CD8-positive, alpha-beta T cell (primary cell): ENCODE measurements at regions of chr17 and their contacts with region 1.

Region 1: DNA sequence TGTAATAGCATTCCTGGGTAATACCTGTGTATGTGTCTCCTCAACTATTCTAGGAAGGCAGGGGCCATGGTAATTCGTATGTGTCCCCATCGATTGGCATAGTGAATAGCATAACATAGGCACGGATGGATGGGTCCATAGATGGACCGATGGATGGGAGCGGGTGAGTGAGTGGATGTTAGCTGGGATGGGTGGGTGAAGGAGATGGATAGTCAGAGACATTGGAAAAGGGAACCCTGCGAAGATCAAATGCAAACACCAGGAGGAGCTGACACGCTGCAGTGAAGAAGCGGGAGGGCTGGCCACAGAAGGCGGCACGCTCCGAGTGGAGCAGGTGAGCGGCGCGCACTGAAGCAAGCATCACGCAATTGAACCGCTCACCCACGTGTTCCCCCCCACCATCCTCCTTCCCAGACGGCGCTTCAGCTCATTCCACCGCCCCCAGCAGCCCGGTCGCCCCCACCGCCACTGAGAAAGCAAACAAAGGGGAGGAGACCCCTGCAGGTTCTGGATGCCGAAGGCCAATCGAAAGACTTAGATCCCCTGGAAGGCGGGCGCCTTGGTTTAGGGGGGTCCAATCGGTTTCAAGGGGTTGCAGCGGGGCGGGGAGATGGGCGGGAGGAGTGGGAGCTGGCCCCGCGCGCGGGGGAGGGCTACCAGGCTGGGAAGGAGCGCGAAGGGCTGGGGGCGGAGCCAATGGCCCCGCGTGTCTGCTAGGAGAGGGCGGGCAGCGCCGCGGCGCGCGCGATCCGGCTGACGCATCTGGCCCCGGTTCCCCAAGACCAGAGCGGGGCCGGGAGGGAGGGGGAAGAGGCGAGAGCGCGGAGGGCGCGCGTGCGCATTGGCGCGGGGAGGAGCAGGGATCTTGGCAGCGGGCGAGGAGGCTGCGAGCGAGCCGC is at the start of gene ARRB2:
- DNase-seq: peak; percentile 98 to 100 (median 99)
- ATAC-seq: peak; percentile 81
- H3K4me3 ChIP-seq: peak within 1 kb of the TSS; percentile 91 to 95
- H3K4me3 Mint-ChIP-seq: peak within 1 kb of the TSS; percentile 98
- H3K27ac ChIP-seq: peak within 1 kb of the TSS; percentile 80 to 86
- H3K27ac Mint-ChIP-seq: peak within 1 kb of the TSS; percentile 98
- H3K4me1 ChIP-seq: peaks cover 35% of the 10 kb centered on the region
- H3K4me1 Mint-ChIP-seq: peaks cover 45% of the 10 kb centered on the region
- H3K27me3 ChIP-seq: no peaks in the 10 kb centered on the region
- H3K27me3 Mint-ChIP-seq: no peaks in the 10 kb centered on the region
- CTCF ChIP-seq: peak; percentile 74
- total RNA-seq, gene ARRB2: 222 to 226 TPM

Region 2: GRCh38 chr17:4366327-4367063 is 343.5 kb before region 1 on chr17 and contains the start of gene UBE2G1:
- CTCF ChIA-PET with region 1: no interaction called
- POLR2A ChIA-PET with region 1: no interaction called
- intact Hi-C with region 1: loop called (anchors 5 to 10 kb)
- DNase-seq: peak; percentile 97 to 100 (median 99)
- ATAC-seq: peak; percentile 86
- H3K4me3 ChIP-seq: peak within 1 kb of the TSS; percentile 53 to 64
- H3K4me3 Mint-ChIP-seq: peak within 1 kb of the TSS; percentile 82
- H3K27ac ChIP-seq: peak within 1 kb of the TSS; percentile 63 to 70
- H3K27ac Mint-ChIP-seq: peak within 1 kb of the TSS; percentile 92
- H3K4me1 ChIP-seq: peaks cover 28% of the 10 kb centered on the region
- H3K4me1 Mint-ChIP-seq: peaks cover 24% of the 10 kb centered on the region
- H3K27me3 ChIP-seq: no peaks in the 10 kb centered on the region
- H3K27me3 Mint-ChIP-seq: no peaks in the 10 kb centered on the region
- CTCF ChIP-seq: no peak
- total RNA-seq, gene UBE2G1: 65.8 to 68.0 TPM

Region 3: GRCh38 chr17:4747847-4748246 is 37.8 kb after region 1 on chr17:
- CTCF ChIA-PET with region 1: interaction called, 5 read pairs
- POLR2A ChIA-PET with region 1: no interaction called
- intact Hi-C with region 1: loop called in 1 of 2 experiments (anchors 5 kb)
- DNase-seq: peak in 7 of 9 experiments; percentile 30 to 76 (median 44)
- ATAC-seq: peak; percentile 93
- H3K4me3 ChIP-seq: no peak overlapping the region
- H3K4me3 Mint-ChIP-seq: peak overlapping the region; percentile 67
- H3K27ac ChIP-seq: no peak overlapping the region
- H3K27ac Mint-ChIP-seq: peak overlapping the region; percentile 86
- H3K4me1 ChIP-seq: peaks cover 17% of the 10 kb centered on the region
- H3K4me1 Mint-ChIP-seq: peaks cover 21% of the 10 kb centered on the region
- H3K27me3 ChIP-seq: no peaks in the 10 kb centered on the region
- H3K27me3 Mint-ChIP-seq: peaks cover 3% of the 10 kb centered on the region
- CTCF ChIP-seq: no peak

Region 4: DNA sequence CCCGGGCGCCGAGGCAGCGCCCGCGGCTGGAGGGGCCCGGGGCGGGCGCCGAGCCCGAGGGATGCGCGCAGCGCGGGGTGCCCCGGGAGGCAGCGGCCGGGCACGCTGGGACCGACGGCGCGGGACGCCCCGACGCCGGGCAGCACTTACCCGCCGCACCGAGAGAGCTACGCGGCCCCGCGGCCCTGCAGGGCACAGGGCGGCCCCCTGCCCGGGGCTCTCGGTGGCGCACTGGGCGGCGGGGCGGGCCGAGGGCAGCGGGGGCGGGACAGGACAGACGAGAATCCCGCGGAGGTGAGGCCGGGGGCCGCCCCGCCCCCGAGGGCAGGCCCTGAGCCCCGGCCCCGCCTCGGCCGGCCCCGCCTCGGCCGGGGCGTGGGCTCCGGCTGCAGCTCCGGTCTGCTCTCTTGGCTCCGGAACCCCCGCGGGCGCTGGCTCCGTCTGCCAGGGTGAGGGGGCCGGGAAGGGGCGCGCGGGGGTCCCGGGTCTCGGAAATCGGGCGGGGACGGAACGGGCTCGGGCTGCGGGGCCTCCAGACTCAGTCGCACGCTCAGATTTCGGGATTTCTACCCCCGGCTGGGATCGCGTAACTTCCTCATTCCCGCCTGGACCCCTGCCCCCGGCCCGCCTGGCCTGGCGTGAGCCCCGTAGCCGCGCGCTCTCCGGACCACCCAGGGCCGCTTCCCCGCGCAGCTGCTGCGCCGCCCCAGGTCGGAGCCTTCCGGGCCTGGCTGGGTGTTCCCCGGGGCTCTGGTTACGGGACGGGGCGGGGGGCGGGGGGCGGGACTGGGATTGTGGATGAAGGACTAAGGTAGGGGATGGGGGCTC is 96.9 kb after region 1 on chr17 and contains the start of gene PLD2:
- CTCF ChIA-PET with region 1: interaction called, 4 read pairs
- POLR2A ChIA-PET with region 1: interaction called, 15 read pairs
- intact Hi-C with region 1: loop called (anchors 1 kb)
- DNase-seq: peak; percentile 60 to 93 (median 85)
- ATAC-seq: peak; percentile 98
- H3K4me3 ChIP-seq: peak within 1 kb of the TSS; percentile 56 to 58
- H3K4me3 Mint-ChIP-seq: peak within 1 kb of the TSS; percentile 81
- H3K27ac ChIP-seq: peak within 1 kb of the TSS in 1 of 2 experiments; percentile 39
- H3K27ac Mint-ChIP-seq: no peak within 1 kb of the TSS
- H3K4me1 ChIP-seq: peaks cover 11% of the 10 kb centered on the region
- H3K4me1 Mint-ChIP-seq: peaks cover 19% of the 10 kb centered on the region
- H3K27me3 ChIP-seq: no peaks in the 10 kb centered on the region
- H3K27me3 Mint-ChIP-seq: no peaks in the 10 kb centered on the region
- CTCF ChIP-seq: no peak
- total RNA-seq, gene PLD2: 14.3 to 15.7 TPM

Region 5: GRCh38 chr17:4895657-4896331 is 185.8 kb after region 1 on chr17:
- CTCF ChIA-PET with region 1: interaction called, 34 read pairs
- POLR2A ChIA-PET with region 1: interaction called, 8 read pairs
- intact Hi-C with region 1: loop called in 1 of 2 experiments (anchors 1 kb)
- DNase-seq: peak in 1 of 9 experiments; percentile 18
- ATAC-seq: no peak
- H3K4me3 ChIP-seq: no peak overlapping the region
- H3K4me3 Mint-ChIP-seq: no peak overlapping the region
- H3K27ac ChIP-seq: no peak overlapping the region
- H3K27ac Mint-ChIP-seq: no peak overlapping the region
- H3K4me1 ChIP-seq: peaks cover 20% of the 10 kb centered on the region
- H3K4me1 Mint-ChIP-seq: peaks cover 14% of the 10 kb centered on the region
- H3K27me3 ChIP-seq: no peaks in the 10 kb centered on the region
- H3K27me3 Mint-ChIP-seq: no peaks in the 10 kb centered on the region
- CTCF ChIP-seq: no peak

Region 6: DNA sequence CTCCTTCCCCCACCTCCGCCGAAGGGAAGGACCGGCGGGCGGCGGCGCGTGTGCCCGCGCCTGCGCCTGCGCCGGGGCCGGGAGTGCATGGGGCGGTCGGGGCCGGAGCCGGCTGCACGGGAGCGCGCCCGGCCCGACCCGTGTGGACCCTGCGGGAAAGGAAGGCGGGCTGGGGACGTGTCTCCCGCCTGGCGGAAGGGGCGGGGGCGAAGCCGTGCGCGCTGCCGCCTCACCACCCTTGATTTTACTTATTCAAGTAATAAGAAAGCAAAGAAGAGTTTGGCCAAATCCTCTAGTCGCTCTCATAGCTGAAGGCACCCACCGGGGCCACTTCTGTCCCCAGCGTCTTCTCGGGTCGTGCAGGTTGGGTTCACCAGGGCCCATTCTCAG is 238.9 kb after region 1 on chr17:
- CTCF ChIA-PET with region 1: no interaction called
- POLR2A ChIA-PET with region 1: no interaction called
- intact Hi-C with region 1: loop called (anchors 2 kb)
- DNase-seq: peak; percentile 44 to 90 (median 70)
- ATAC-seq: peak; percentile 26
- H3K4me3 ChIP-seq: peak overlapping the region; percentile 99 to 100
- H3K4me3 Mint-ChIP-seq: peak overlapping the region; percentile 94
- H3K27ac ChIP-seq: peak overlapping the region; percentile 72 to 81
- H3K27ac Mint-ChIP-seq: peak overlapping the region; percentile 93
- H3K4me1 ChIP-seq: peaks cover 38% of the 10 kb centered on the region
- H3K4me1 Mint-ChIP-seq: peaks cover 45% of the 10 kb centered on the region
- H3K27me3 ChIP-seq: no peaks in the 10 kb centered on the region
- H3K27me3 Mint-ChIP-seq: no peaks in the 10 kb centered on the region
- CTCF ChIP-seq: no peak

Region 7: GRCh38 chr17:5019475-5019956 is 309.5 kb after region 1 on chr17:
- CTCF ChIA-PET with region 1: no interaction called
- POLR2A ChIA-PET with region 1: no interaction called
- intact Hi-C with region 1: loop called in 1 of 2 experiments (anchors 1 kb)
- DNase-seq: peak in 8 of 9 experiments; percentile 32 to 68 (median 52)
- ATAC-seq: peak; percentile 95
- H3K4me3 ChIP-seq: no peak overlapping the region
- H3K4me3 Mint-ChIP-seq: no peak overlapping the region
- H3K27ac ChIP-seq: no peak overlapping the region
- H3K27ac Mint-ChIP-seq: peak overlapping the region; percentile 75
- H3K4me1 ChIP-seq: no peaks in the 10 kb centered on the region
- H3K4me1 Mint-ChIP-seq: peaks cover 7% of the 10 kb centered on the region
- H3K27me3 ChIP-seq: no peaks in the 10 kb centered on the region
- H3K27me3 Mint-ChIP-seq: no peaks in the 10 kb centered on the region
- CTCF ChIP-seq: no peak